Vagina (tissue), 2 donors: ENCODE measurements at regions of chr1 and their contacts with region 1.

Region 1: DNA sequence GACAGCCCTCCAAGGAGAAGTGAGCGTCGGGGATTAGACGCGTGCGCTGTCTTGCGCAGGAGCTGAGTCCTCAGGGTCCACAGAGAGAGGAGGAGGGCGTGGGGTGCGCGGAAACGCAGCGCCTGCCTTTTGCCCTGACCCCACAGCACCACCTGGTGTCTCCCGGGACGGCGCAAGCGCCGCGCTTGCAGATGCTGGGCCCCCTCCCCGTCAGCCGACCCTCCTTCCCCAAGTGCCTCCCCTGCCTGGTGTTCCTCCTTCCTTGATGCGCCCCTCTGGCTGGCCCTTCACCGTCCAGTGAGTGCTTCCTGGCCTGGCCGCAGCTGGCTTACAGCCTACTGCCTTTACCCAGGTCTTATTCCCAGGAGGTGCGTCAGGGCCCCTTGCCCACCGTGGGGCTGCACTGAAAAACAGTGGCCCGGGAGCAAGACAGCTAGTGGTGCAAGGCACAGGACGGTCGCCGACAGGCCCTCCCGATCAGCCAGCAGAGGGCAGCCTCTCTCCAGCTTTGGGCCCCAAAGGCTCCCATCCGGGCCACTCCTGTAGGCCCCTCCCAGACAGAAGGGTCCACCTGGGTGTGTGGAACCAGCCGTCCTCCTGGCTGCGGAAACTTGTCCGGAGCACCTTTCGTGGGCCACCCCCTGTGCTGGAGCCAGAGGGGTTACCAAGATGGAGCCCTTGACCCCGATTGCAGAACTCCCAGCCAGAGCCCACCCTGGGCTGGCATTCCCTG is 12.9 kb upstream of the PHLDA3 start:
- DNase-seq: no peak
- H3K4me3 ChIP-seq: peak overlapping the region; percentile 41
- H3K27ac ChIP-seq: peak overlapping the region; percentile 83
- H3K4me1 ChIP-seq: peaks cover 32% of the 10 kb centered on the region
- H3K27me3 ChIP-seq: no peaks in the 10 kb centered on the region
- CTCF ChIP-seq: peak; percentile 89 to 95 (median 95)
- POLR2A ChIP-seq: no peak

Region 2: DNA sequence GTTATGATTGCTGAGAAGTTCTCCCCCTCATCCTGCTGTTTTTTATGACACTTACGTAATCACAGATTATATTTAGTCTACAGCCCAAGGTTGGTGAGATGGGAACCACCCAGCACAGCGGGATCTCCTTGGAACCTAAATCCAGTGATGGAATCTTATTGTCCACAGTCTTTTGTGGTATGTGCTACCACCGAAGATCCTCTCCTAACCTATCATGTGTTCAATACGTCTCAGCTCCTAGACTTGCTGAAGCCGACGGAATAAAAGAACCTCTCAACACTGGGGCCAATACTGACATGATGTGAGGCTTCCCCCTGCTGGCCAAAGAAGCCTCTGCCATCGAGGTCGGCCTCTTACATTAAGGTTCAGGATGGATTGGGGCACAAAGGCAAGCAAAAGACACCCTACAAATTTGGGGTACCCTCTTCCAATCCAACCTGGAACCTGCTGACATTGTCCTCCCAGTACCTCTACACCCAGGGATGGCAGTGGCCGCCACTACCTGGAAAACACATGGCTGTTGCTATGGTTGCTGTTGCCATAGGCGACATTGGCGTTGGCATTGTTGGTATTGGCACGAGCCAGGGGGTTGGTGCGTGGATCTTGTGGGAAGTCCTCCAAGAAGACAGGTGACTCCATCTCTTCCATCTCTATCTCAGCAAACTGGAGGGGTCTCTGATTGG is 439.0 kb before region 1 on chr1:
- intact Hi-C with region 1: no loop called
- DNase-seq: no peak
- H3K4me3 ChIP-seq: no peak overlapping the region
- H3K27ac ChIP-seq: no peak overlapping the region
- H3K4me1 ChIP-seq: no peaks in the 10 kb centered on the region
- H3K27me3 ChIP-seq: no peaks in the 10 kb centered on the region
- CTCF ChIP-seq: peak; percentile 59 to 75 (median 66)
- POLR2A ChIP-seq: no peak

Region 3: GRCh38 chr1:201447911-201448871 is 33.7 kb before region 1 on chr1:
- intact Hi-C with region 1: loop called (anchors 5 kb)
- DNase-seq: no peak
- H3K4me3 ChIP-seq: no peak overlapping the region
- H3K27ac ChIP-seq: peak overlapping the region; percentile 36
- H3K4me1 ChIP-seq: peaks cover 37% of the 10 kb centered on the region
- H3K27me3 ChIP-seq: no peaks in the 10 kb centered on the region
- CTCF ChIP-seq: peak; percentile 77 to 86 (median 79)
- POLR2A ChIP-seq: no peak

Region 4: GRCh38 chr1:201511941-201512539 is 30.1 kb after region 1 on chr1:
- intact Hi-C with region 1: loop called (anchors 2 kb)
- DNase-seq: no peak
- H3K4me3 ChIP-seq: no peak overlapping the region
- H3K27ac ChIP-seq: peak overlapping the region; percentile 78
- H3K4me1 ChIP-seq: peaks cover 40% of the 10 kb centered on the region
- H3K27me3 ChIP-seq: no peaks in the 10 kb centered on the region
- CTCF ChIP-seq: no peak
- POLR2A ChIP-seq: no peak

Region 5: GRCh38 chr1:201593200-201593921 is 111.4 kb after region 1 on chr1:
- intact Hi-C with region 1: no loop called
- DNase-seq: peak in 1 of 2 donors; percentile 98
- H3K4me3 ChIP-seq: no peak overlapping the region
- H3K27ac ChIP-seq: peak overlapping the region; percentile 64
- H3K4me1 ChIP-seq: peaks cover 40% of the 10 kb centered on the region
- H3K27me3 ChIP-seq: no peaks in the 10 kb centered on the region
- CTCF ChIP-seq: no peak
- POLR2A ChIP-seq: no peak